HepG2 (cell line): ENCODE measurements at regions of chr11 and their contacts with region 1.

Region 1: DNA sequence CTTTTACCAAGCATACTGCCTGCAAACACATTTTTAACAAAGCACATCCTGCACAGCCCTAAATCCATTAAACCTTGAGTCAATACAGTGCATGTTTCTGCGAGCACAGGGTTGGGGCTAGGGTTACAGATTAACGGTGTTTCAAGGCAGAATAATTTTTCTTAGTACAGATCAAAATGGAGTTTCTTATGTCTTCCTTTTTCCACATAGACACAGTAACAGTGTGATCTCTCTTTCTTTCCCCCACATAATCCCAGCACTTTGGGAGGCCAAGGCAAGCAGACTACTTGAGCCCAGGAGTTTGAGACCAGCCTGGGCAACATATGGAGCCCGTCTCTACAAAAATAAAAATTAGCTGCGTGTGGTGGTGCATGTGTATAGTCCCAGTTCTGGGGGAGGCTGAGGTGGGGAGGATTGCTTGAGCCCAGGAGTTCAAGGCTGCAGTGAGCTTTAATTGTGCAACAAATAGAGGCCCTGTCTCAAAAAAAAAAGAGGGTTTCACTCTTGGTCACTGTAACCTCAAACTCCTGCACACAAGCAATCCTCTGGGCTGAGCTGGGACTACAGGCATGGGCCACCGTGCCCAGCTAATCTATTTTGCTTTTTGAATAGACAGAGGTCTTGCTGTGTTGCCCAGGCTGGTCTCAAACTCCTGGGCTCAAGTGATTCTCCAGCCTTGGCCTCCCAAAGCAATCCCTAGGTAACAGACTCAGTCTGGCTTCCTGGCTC is 19.7 kb upstream of the SLC3A2 start:
- DNase-seq: no peak
- ATAC-seq: peak; percentile 48
- H3K4me3 ChIP-seq: peak overlapping the region in 1 of 3 experiments; percentile 20; a peak in 1 of 6 replicates
- H3K27ac ChIP-seq: peak overlapping the region; percentile 59
- H3K4me1 ChIP-seq: peaks cover 67% of the 10 kb centered on the region
- H3K27me3 ChIP-seq: no peaks in the 10 kb centered on the region; a peak in 1 of 5 replicates
- CTCF ChIP-seq: no peak
- EP300 ChIP-seq: no peak
- POLR2A ChIP-seq: no peak
- RAD21 ChIP-seq: no peak

Region 2: GRCh38 chr11:62732801-62733200 is 128.2 kb before region 1 on chr11:
- CTCF ChIA-PET with region 1: interaction called, 4 read pairs
- POLR2A ChIA-PET with region 1: interaction called, 31 read pairs
- in situ Hi-C with region 1: no loop called
- intact Hi-C with region 1: loop called (anchors 5 kb)
- DNase-seq: peak; percentile 43
- ATAC-seq: no peak
- H3K4me3 ChIP-seq: no peak overlapping the region
- H3K27ac ChIP-seq: no peak overlapping the region
- H3K4me1 ChIP-seq: peaks cover 18% of the 10 kb centered on the region
- H3K27me3 ChIP-seq: peaks cover 0 to 3% of the 10 kb centered on the region in 2 experiments; a peak in 1 of 5 replicates
- CTCF ChIP-seq: peak; percentile 33
- EP300 ChIP-seq: no peak
- POLR2A ChIP-seq: no peak
- RAD21 ChIP-seq: no peak

Region 3: DNA sequence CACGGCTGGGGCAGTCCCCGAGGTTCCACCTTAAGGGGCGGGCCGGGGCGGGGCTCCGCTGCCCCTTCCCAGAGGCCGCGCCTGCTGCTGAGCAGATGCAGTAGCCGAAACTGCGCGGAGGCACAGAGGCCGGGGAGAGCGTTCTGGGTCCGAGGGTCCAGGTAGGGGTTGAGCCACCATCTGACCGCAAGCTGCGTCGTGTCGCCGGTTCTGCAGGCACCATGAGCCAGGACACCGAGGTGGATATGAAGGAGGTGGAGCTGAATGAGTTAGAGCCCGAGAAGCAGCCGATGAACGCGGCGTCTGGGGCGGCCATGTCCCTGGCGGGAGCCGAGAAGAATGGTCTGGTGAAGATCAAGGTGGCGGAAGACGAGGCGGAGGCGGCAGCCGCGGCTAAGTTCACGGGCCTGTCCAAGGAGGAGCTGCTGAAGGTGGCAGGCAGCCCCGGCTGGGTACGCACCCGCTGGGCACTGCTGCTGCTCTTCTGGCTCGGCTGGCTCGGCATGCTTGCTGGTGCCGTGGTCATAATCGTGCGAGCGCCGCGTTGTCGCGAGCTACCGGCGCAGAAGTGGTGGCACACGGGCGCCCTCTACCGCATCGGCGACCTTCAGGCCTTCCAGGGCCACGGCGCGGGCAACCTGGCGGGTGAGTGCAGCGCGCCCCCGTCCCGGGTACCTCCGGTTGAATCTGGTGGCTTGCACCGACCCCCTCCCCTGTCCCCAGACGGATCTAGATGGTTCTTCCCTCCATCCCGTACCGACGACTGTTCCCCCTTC is 20.0 kb after region 1 on chr11 and contains the start of gene SLC3A2:
- CTCF ChIA-PET with region 1: no interaction called
- POLR2A ChIA-PET with region 1: interaction called, 45 read pairs
- in situ Hi-C with region 1: no loop called
- intact Hi-C with region 1: loop called (anchors 1 kb)
- DNase-seq: peak; percentile 74
- ATAC-seq: peak; percentile 91
- H3K4me3 ChIP-seq: peak within 1 kb of the TSS; percentile 92 to 99 (median 94)
- H3K27ac ChIP-seq: peak within 1 kb of the TSS; percentile 93
- H3K4me1 ChIP-seq: peaks cover 56% of the 10 kb centered on the region
- H3K27me3 ChIP-seq: no peaks in the 10 kb centered on the region; a peak in 1 of 5 replicates
- CTCF ChIP-seq: peak; percentile 94
- EP300 ChIP-seq: no peak
- POLR2A ChIP-seq: peak; percentile 96 to 98
- RAD21 ChIP-seq: peak; percentile 84
- total RNA-seq, gene SLC3A2: 94.8 and 213 TPM in 2 replicates

Region 4: DNA sequence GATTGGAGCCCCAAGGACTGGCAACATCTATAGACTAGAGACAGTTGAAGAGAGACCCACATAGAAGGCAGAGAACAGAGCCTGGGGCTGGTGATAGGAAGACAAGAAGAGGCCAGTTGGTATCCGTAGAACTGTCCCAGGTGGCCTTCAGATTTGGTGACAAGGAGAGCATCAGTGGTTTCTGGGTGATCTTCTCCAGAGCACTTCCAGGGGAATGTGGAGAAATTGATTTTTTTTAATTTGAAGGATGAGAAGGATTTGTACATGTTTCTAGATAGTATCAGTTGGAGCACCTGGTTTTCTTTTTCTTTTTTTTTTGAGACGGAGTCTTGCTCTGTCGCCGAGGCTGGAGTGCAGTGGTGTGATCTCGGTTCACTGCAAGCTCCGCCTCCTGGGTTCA is 34.5 kb after region 1 on chr11:
- CTCF ChIA-PET with region 1: no interaction called
- POLR2A ChIA-PET with region 1: no interaction called
- in situ Hi-C with region 1: no loop called
- intact Hi-C with region 1: no loop called
- DNase-seq: no peak
- ATAC-seq: no peak
- H3K4me3 ChIP-seq: no peak overlapping the region
- H3K27ac ChIP-seq: no peak overlapping the region
- H3K4me1 ChIP-seq: peaks cover 24% of the 10 kb centered on the region
- H3K27me3 ChIP-seq: peaks cover 1 to 8% of the 10 kb centered on the region in 2 experiments; a peak in 2 of 5 replicates
- CTCF ChIP-seq: no peak
- EP300 ChIP-seq: no peak
- POLR2A ChIP-seq: no peak
- RAD21 ChIP-seq: no peak